Dorsolateral prefrontal cortex (tissue), 120 donors: ENCODE measurements at regions of chr4 and their contacts with region 1.

Region 1: GRCh38 chr4:180828440-180829018 is 1414.7 kb upstream of the TENM3 start:
- DNase-seq: peak in 3 of 10 donors; percentile 14 to 68 (median 17)
- H3K4me3 ChIP-seq: peak overlapping the region in 6 of 59 donors; percentile 39 to 68 (median 58)
- H3K27ac ChIP-seq: no peak overlapping the region
- H3K27me3 ChIP-seq: peaks cover 0 to 3% (median 0%) of the 10 kb centered on the region in 45 donors
- CTCF ChIP-seq: peak; percentile 58 to 99 (median 81)

Region 2: DNA sequence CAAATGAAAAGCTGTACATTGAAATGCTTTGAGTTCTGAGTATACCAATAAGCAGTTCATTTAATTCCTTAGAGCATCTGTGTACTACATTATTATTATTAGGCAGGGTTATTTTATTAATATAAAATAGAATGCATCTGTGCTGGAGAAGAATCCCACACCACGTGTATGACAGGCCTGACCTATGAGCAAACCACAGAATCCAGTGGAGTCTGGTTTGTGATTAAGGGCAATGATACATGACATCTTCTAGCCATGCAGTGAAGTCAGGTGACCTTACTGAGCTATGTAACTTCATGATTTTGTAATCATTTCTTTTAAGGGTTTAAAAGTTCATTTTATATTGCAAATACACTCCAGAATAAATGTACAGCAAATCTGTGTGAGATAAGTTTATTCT is 249.7 kb after region 1 on chr4:
- intact Hi-C with region 1: no loop called
- DNase-seq: no peak
- H3K4me3 ChIP-seq: no peak overlapping the region
- H3K27ac ChIP-seq: no peak overlapping the region
- H3K27me3 ChIP-seq: no peaks in the 10 kb centered on the region
- CTCF ChIP-seq: no peak

Region 3: GRCh38 chr4:181528570-181529184 is 700.1 kb after region 1 on chr4:
- intact Hi-C with region 1: loop called in 1 of 2 experiments (anchors 5 kb)
- DNase-seq: peak; percentile 34 to 79 (median 72)
- H3K4me3 ChIP-seq: no peak overlapping the region
- H3K27ac ChIP-seq: no peak overlapping the region
- H3K27me3 ChIP-seq: peaks cover 0 to 47% (median 4%) of the 10 kb centered on the region in 45 donors
- CTCF ChIP-seq: peak; percentile 63 to 94 (median 86)